Naive thymus-derived CD8-positive, alpha-beta T cell (primary cell): ENCODE measurements at regions of chr1 and their contacts with region 1.

Region 1: DNA sequence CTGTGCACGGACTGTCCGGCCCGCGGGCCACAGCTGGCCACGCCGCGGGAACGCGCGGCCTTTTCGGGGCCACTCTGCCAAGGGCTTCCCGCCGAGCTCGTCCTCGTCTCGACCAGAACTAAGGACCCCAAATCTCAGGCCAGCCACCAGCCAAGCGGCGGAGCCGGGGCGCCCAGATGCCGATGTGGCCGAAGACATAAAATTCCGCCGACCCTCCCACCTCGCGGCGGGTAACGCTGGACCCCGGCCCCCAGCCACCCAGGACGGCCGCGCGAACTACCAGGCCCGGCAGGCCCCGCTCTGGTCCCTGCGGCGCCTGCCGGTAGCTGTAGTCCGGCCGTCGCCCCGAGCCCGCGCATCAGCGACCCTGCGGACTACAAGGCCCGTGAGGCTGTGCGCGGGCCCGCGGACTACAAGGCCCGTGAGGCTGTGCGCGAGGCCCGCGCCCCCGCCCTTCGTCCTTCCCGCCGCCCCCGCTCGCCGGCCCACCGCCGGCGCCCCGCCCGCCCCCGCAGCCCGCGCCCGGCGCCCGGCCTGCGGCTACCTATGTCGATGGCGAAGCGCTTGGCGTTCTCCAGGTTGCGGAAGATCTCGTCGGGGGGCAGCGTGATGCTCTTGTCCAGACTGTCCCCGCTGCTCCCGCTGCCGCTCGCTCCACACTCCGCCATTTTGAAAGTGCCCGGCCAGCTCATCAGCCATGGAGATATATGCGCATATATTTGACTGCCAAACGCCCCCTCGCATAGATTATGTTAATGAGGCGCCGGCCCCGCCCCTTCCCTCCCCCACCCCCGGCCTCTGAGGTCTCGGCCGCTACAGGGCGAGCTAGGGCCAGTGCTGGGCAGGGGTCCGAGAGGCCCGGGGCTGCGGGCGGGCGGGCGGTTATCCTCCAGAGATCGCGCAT is at the start of gene PANK4:
- DNase-seq: peak; percentile 79 to 91 (median 88)
- ATAC-seq: peak; percentile 77 to 85
- H3K4me3 Mint-ChIP-seq: peak within 1 kb of the TSS; percentile 88 to 99 (median 92)
- H3K27ac Mint-ChIP-seq: peak within 1 kb of the TSS; percentile 79 to 99 (median 96)
- H3K4me1 Mint-ChIP-seq: peaks cover 32 to 58% (median 49%) of the 10 kb centered on the region in 4 donors
- H3K27me3 Mint-ChIP-seq: peaks cover 0 to 6% (median 3%) of the 10 kb centered on the region in 5 donors
- polyA plus RNA-seq, gene PANK4: 9.0 to 31.7 (median 13.4) TPM

Region 2: DNA sequence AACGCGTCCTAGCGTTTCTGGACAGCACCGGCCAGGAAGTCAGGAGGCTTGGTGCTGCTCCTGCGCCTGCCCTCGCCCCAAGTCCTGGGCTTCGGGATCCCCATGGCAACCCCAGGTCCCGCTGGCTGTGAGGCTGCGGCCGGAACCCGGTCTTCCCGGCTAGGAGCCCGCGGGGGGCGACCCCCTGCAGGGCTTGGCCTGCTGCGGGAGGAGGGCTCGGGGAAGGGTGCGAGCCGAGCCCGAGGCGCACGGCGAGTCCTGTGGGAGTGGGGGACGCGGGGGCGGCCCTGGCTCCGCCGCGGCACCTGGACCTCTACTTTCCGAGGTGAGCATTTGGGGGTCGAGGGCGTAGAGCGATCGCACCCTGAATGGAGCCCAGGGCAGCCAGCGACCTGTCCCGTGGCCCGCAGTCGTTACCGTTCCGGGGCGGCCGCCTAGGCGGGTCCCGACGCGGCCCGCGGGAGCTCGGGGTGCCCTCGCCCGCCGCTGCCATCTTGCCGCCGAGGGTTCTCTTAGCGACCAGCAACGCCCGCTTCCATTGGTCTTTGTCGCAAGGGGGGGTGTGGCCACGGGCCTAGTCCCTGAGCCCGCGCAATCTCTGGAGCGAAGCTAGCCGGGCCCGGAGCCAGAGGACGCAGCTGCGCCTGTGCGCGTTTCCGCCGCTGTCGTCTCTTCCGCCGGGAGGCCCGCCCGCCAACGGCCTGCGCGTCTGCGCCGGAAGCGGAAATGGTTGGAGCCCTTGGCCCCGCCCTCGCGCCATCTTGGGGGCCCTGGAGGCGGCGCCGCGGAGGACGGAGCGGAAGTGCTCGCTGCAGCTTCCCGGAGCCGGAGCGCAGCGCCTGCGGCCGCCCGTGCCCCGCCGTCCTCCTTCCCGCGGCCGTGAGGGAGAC is 134.9 kb before region 1 on chr1 and contains the starts of genes MORN1 and RER1:
- POLR2A ChIA-PET with region 1: interaction called, 15 read pairs
- DNase-seq: peak; percentile 90 to 100 (median 99)
- ATAC-seq: peak; percentile 95 to 96
- H3K4me3 Mint-ChIP-seq: peak within 1 kb of the TSS; percentile 82 to 94 (median 90)
- H3K27ac Mint-ChIP-seq: peak within 1 kb of the TSS; percentile 87 to 94 (median 92)
- H3K4me1 Mint-ChIP-seq: peaks cover 22 to 43% (median 37%) of the 10 kb centered on the region in 4 donors
- H3K27me3 Mint-ChIP-seq: no peaks in the 10 kb centered on the region
- polyA plus RNA-seq, gene MORN1: 4.3 to 7.1 (median 5.0) TPM
- polyA plus RNA-seq, gene RER1: 118 to 146 (median 126) TPM

Region 3: DNA sequence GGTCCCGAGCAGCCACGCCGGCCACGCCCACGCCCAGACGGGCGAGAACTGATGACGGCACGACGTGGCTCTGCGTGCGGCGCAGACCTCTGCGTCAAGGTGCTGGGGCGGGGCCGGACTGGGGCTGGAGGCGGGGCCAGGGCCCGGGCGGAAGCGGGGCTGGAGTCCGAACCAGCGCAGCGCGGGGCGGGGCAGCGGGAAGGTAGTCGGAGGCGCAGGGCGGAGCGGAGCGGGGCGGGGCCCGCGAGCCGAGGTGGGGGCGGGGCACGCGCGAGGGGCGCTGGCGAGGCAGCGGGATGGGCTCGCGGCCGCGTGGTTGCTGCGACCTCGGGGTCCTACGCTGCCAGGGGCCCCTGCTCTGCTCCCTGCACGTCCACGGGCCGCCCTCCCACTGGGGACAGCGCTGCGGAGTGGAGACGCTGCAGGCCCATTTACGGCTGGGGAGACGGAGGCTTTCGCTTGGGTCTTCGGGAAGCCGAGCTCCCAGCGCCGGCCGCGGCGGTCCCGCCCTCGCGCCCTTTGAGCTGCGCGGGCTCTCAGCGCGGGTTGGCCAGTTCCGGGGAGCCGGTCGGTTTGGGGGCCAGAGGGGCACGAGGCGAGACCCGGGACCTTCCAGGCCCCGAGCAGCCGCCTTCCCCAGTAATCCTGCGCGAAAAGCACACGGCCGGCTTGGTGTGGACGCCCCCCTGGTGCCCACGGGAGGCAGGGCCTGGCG is 113.5 kb before region 1 on chr1 and contains the start of gene PEX10:
- POLR2A ChIA-PET with region 1: interaction called, 131 read pairs
- DNase-seq: peak; percentile 96 to 100 (median 98)
- ATAC-seq: peak; percentile 78 to 88
- H3K4me3 Mint-ChIP-seq: peak within 1 kb of the TSS; percentile 77 to 91 (median 86)
- H3K27ac Mint-ChIP-seq: peak within 1 kb of the TSS; percentile 55 to 96 (median 87)
- H3K4me1 Mint-ChIP-seq: peaks cover 27 to 54% (median 41%) of the 10 kb centered on the region in 4 donors
- H3K27me3 Mint-ChIP-seq: no peaks in the 10 kb centered on the region
- polyA plus RNA-seq, gene PEX10: 7.5 to 10.4 (median 9.1) TPM

Region 4: GRCh38 chr1:2494323-2494693 is 31.9 kb before region 1 on chr1:
- POLR2A ChIA-PET with region 1: interaction called, 78 read pairs
- DNase-seq: no peak
- ATAC-seq: no peak
- H3K4me3 Mint-ChIP-seq: peak overlapping the region in 7 of 10 donors; percentile 55 to 80 (median 72)
- H3K27ac Mint-ChIP-seq: peak overlapping the region; percentile 82 to 95 (median 92)
- H3K4me1 Mint-ChIP-seq: peaks cover 20 to 63% (median 38%) of the 10 kb centered on the region in 4 donors
- H3K27me3 Mint-ChIP-seq: no peaks in the 10 kb centered on the region

Region 5: DNA sequence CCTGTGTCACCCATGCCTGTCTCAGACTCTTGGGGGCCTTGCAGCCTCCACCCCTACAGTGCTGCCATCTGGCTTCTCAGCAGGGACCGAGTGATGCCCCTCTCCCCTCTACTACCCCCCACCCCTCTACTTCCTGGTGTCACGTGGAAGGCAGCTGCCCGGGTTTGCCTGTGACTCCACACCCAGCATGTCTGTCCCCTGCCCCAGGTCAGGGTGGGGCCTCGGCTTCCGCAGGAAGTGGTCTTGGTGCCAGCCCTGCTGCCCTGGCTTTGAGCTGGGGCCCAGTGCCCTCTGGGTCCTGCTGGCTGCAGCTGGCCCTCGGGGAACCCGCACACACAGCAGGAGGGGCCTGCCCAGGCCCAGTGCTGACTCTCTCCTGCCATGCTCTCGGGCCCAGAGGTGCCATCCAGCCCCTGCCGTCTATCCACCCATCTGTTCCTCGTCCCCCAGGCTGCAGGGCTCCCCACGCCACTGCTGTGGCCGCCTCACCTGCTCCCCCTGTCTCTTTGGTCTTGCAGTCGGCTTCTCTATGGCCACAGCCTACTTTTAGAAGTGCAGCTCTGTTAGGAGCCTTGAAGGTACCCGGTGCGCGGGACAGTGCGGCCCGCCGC is 26.1 kb before region 1 on chr1:
- POLR2A ChIA-PET with region 1: interaction called, 78 read pairs
- DNase-seq: peak in 1 of 10 donors; percentile 29
- ATAC-seq: peak; percentile 29 to 53
- H3K4me3 Mint-ChIP-seq: peak overlapping the region in 9 of 10 donors; percentile 29 to 86 (median 64)
- H3K27ac Mint-ChIP-seq: peak overlapping the region in 8 of 10 donors; percentile 29 to 86 (median 80)
- H3K4me1 Mint-ChIP-seq: peaks cover 9 to 44% (median 36%) of the 10 kb centered on the region in 4 donors
- H3K27me3 Mint-ChIP-seq: no peaks in the 10 kb centered on the region

Region 6: GRCh38 chr1:2556277-2556677 is 30.1 kb after region 1 on chr1 and contains the start of gene TNFRSF14:
- POLR2A ChIA-PET with region 1: interaction called, 39 read pairs
- DNase-seq: peak; percentile 53 to 87 (median 74)
- ATAC-seq: peak; percentile 73 to 79
- H3K4me3 Mint-ChIP-seq: peak within 1 kb of the TSS; percentile 91 to 99 (median 98)
- H3K27ac Mint-ChIP-seq: peak within 1 kb of the TSS; percentile 93 to 99 (median 98)
- H3K4me1 Mint-ChIP-seq: peaks cover 28 to 62% (median 44%) of the 10 kb centered on the region in 4 donors
- H3K27me3 Mint-ChIP-seq: no peaks in the 10 kb centered on the region
- polyA plus RNA-seq, gene TNFRSF14: 45.8 to 61.6 (median 48.9) TPM